Activated CD4-positive, alpha-beta T cell treated with anti-CD3 and anti-CD28 coated beads, Interleukin-2, amount 10 ng/mL, durations not matched to agents 7 days and 5 days (primary cell): ENCODE measurements at regions of chr19 and their contacts with region 1.

Region 1: DNA sequence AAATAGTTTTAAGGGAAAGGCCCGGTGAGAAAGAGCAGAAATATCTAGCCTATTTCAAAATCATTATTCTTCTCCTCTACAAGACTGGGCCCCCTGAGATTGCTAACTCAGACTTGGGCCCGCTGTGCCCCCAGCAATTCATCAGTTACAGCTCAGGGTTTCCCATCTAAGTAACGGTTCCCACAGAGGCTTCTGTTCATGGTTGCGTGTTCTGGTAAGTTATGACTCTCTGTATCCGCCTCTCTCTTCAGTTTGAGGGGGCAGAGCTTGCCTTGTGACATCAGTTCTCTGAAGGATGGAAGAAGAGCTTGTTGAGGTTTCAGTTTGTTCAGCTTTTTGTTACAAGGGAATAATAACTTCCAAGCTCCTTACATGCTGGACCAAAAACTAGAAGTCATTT is 11.6 kb downstream of the ZNF57 start:
- DNase-seq: no peak
- H3K4me3 Mint-ChIP-seq: no peak overlapping the region
- H3K27ac Mint-ChIP-seq: no peak overlapping the region
- H3K4me1 Mint-ChIP-seq: peaks cover 9% of the 10 kb centered on the region
- H3K27me3 Mint-ChIP-seq: no peaks in the 10 kb centered on the region

Region 2: DNA sequence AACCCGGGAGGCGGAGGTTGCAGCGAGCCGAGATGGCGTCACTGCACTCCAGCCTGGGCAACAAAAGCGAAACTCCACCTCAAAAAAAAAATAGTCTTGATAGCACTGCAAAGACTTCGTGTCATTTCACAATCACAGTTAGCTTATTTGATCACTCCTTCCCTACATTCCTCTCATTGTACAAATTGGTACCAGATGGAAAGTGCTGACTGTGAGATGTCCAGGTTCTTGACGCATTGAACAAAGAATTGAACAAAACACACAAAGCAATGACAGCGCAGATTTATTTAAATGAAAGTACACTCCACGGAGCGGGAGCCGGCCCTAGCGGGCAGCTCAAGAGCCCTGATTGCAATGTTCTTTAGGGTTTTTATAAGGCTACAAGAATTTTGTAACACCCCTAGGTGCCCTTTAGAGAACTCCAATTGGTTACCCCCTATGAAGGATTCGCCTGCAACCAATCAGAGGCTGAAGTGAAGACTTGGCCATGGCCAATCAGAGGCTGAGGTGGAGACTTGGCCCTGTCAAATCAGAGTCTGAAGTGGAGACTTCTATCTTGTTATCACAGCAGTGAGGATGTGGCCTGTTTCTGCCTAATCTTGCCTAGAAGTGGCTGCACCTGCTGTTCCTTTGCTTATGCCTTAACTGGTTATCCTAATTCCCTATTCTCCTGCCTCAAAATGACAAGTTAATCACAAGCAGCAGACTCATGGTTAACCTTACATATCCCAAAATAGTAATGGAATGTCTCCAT is 28.4 kb before region 1 on chr19:
- CTCF ChIA-PET with region 1: no interaction called
- POLR2A ChIA-PET with region 1: no interaction called
- DNase-seq: no peak
- H3K4me3 Mint-ChIP-seq: no peak overlapping the region
- H3K27ac Mint-ChIP-seq: no peak overlapping the region
- H3K4me1 Mint-ChIP-seq: peaks cover 7% of the 10 kb centered on the region
- H3K27me3 Mint-ChIP-seq: no peaks in the 10 kb centered on the region

Region 3: GRCh38 chr19:2923510-2923909 is 11.2 kb after region 1 on chr19:
- CTCF ChIA-PET with region 1: interaction called, 10 read pairs
- POLR2A ChIA-PET with region 1: no interaction called
- DNase-seq: no peak
- H3K4me3 Mint-ChIP-seq: no peak overlapping the region
- H3K27ac Mint-ChIP-seq: no peak overlapping the region
- H3K4me1 Mint-ChIP-seq: no peaks in the 10 kb centered on the region
- H3K27me3 Mint-ChIP-seq: no peaks in the 10 kb centered on the region